ENCODE measurements at regions of chr1 and their contacts with region 1.

Region 1: GRCh38 chr1:178869119-178869697 is 1.7 kb downstream of the ANGPTL1 start:
- DNase-seq: no peak
- ATAC-seq: no peak
- H3K4me3 ChIP-seq: no peak overlapping the region
- H3K4me1 ChIP-seq: peaks cover 15% of the 10 kb centered on the region
- CTCF ChIP-seq: no peak

Region 2: DNA sequence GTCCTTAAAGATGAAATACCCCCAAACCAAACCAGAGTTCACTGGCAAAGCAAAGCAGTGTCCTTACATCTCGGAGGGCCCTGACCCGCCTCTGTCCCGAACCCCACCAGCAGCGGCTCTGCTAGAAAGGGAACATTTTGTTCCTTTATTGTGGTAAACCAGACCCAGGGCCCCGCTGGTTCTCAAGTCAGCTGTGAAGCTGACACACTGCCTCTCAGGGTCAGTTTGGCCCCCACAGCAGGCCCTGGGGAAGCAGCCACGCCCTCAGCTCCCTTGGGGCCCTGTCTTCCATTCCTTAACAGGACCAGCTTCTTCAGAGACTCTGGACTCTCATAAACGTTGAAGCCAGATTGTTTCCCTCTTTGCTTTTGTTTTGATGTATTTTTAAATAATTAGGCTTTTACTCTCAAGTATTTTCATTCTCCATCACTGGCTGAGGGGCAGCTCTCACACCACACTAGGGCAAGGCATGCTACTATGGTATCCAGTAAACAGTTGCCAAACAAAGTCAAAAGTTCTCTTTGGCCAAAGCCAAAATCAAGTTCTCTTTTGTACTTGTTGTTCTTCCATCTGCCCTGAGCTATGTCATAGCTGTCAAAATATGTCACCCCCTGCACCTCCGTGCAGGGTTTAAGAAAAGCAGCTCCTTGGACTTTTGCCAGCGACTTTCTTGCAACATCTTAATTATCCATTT is 62.8 kb after region 1 on chr1:
- intact Hi-C with region 1: loop called in 1 of 2 experiments (anchors 10 kb)
- DNase-seq: peak; percentile 51 to 81 (median 60)
- ATAC-seq: peak; percentile 65
- H3K4me3 ChIP-seq: no peak overlapping the region
- H3K4me1 ChIP-seq: peaks cover 5% of the 10 kb centered on the region
- CTCF ChIP-seq: no peak